HAP-1 (cell line): ENCODE measurements at regions of chr3 and their contacts with region 1.

Region 1: GRCh38 chr3:25594007-25594502 is 70.7 kb downstream of the TOP2B start:
- DNase-seq: peak; percentile 43 to 83
- H3K4me3 ChIP-seq: no peak overlapping the region
- H3K4me1 ChIP-seq: no peaks in the 10 kb centered on the region
- H3K27me3 ChIP-seq: no peaks in the 10 kb centered on the region

Region 2: DNA sequence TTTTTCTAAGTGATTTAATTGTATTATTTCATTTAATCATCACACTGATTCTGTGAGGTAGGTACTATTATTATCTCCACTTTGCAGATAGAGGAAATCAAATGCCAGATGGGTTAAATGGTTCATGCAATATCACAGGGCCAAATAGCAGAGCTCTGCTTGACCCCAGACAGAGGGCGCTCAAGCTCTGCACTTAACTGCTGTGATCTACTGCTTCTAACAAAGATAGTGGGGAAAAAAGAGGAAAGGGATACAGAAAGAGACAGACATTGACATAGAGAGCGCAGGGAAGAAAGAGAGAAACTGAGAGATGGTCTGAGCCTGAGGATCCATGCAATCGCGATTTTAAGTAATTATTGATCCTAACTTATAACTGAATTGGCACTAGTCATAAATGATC is 820.3 kb before region 1 on chr3:
- in situ Hi-C with region 1: loop called (anchors 10 kb)
- DNase-seq: peak; percentile 73 to 85
- H3K4me3 ChIP-seq: no peak overlapping the region
- H3K4me1 ChIP-seq: no peaks in the 10 kb centered on the region
- H3K27me3 ChIP-seq: peaks cover 25% of the 10 kb centered on the region

Region 3: GRCh38 chr3:24963762-24964625 is 630.1 kb before region 1 on chr3:
- in situ Hi-C with region 1: loop called (anchors 25 kb)
- DNase-seq: peak; percentile 22 to 35
- H3K4me3 ChIP-seq: no peak overlapping the region
- H3K4me1 ChIP-seq: no peaks in the 10 kb centered on the region
- H3K27me3 ChIP-seq: no peaks in the 10 kb centered on the region